ENCODE measurements at regions of chr9 and their contacts with region 1.

Region 1: DNA sequence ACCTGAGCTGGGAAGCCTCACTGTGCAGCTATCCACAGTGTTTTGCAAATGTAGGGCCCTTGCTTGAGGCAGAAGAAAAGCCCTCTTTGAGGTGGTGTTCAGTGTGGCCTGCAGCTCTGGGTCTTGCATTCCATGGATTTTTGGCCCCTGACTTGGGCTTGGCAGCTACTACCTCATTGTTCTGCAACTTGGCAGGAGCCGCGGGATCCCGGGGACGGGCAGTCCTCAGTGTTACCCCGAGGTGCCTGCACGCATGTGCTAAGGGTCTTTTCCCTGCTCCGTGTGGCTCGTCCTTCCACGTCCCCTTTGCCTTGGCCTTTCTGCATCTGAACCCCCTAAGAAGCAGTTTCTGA is 39.8 kb downstream of the NEK6 start:
- DNase-seq: peak; percentile 60
- ATAC-seq: no peak
- H3K4me3 ChIP-seq: no peak overlapping the region
- H3K27ac ChIP-seq: no peak overlapping the region
- H3K4me1 ChIP-seq: peaks cover 60% of the 10 kb centered on the region
- H3K27me3 ChIP-seq: no peaks in the 10 kb centered on the region
- CTCF ChIP-seq: no peak
- EP300 ChIP-seq: no peak
- POLR2A ChIP-seq: no peak
- RAD21 ChIP-seq: no peak

Region 2: GRCh38 chr9:124126571-124127289 is 170.8 kb before region 1 on chr9:
- CTCF ChIA-PET with region 1: no interaction called
- POLR2A ChIA-PET with region 1: no interaction called
- in situ Hi-C with region 1: no loop called
- intact Hi-C with region 1: no loop called
- DNase-seq: peak; percentile 56
- ATAC-seq: peak; percentile 69
- H3K4me3 ChIP-seq: no peak overlapping the region
- H3K27ac ChIP-seq: no peak overlapping the region
- H3K4me1 ChIP-seq: peaks cover 20% of the 10 kb centered on the region
- H3K27me3 ChIP-seq: peaks cover 2 to 13% of the 10 kb centered on the region in 2 experiments; a peak in 3 of 5 replicates
- CTCF ChIP-seq: peak; percentile 97
- EP300 ChIP-seq: no peak
- POLR2A ChIP-seq: no peak
- RAD21 ChIP-seq: peak; percentile 90

Region 3: GRCh38 chr9:124263800-124264426 is 33.6 kb before region 1 on chr9:
- CTCF ChIA-PET with region 1: no interaction called
- POLR2A ChIA-PET with region 1: interaction called, 3 read pairs
- in situ Hi-C with region 1: no loop called
- intact Hi-C with region 1: loop called (anchors 1 kb)
- DNase-seq: peak; percentile 65
- ATAC-seq: peak; percentile 84
- H3K4me3 ChIP-seq: peak overlapping the region in 1 of 3 experiments; percentile 50; a peak in 2 of 6 replicates
- H3K27ac ChIP-seq: peak overlapping the region; percentile 50
- H3K4me1 ChIP-seq: peaks cover 84% of the 10 kb centered on the region
- H3K27me3 ChIP-seq: peaks cover 0 to 3% of the 10 kb centered on the region in 2 experiments; a peak in 1 of 5 replicates
- CTCF ChIP-seq: peak; percentile 18
- EP300 ChIP-seq: no peak
- POLR2A ChIP-seq: 0 out of 4 replicates have a peak, but pooled peaks of 1 of the 2 experiments have one; percentile 30
- RAD21 ChIP-seq: no peak

Region 4: GRCh38 chr9:124812401-124813016 is 515.0 kb after region 1 on chr9:
- CTCF ChIA-PET with region 1: no interaction called
- POLR2A ChIA-PET with region 1: no interaction called
- in situ Hi-C with region 1: no loop called
- intact Hi-C with region 1: no loop called
- DNase-seq: peak; percentile 56
- ATAC-seq: no peak
- H3K4me3 ChIP-seq: no peak overlapping the region
- H3K27ac ChIP-seq: no peak overlapping the region
- H3K4me1 ChIP-seq: peaks cover 49% of the 10 kb centered on the region
- H3K27me3 ChIP-seq: no peaks in the 10 kb centered on the region
- CTCF ChIP-seq: no peak
- EP300 ChIP-seq: no peak
- POLR2A ChIP-seq: no peak
- RAD21 ChIP-seq: no peak